SK-N-SH (cell line): ENCODE measurements at regions of chr3 and their contacts with region 1.

Region 1: GRCh38 chr3:126971891-126972351 is 11.0 kb upstream of the PLXNA1 start:
- DNase-seq: peak; percentile 83
- H3K4me3 ChIP-seq: no peak overlapping the region
- H3K27ac ChIP-seq: peak overlapping the region in 1 of 2 experiments; percentile 60; a peak in 1 of 4 replicates
- H3K4me1 ChIP-seq: peaks cover 0 to 18% of the 10 kb centered on the region in 2 experiments; a peak in 1 of 4 replicates
- H3K27me3 ChIP-seq: no peaks in the 10 kb centered on the region
- CTCF ChIP-seq: no peak
- EP300 ChIP-seq: no peak
- RAD21 ChIP-seq: no peak

Region 2: DNA sequence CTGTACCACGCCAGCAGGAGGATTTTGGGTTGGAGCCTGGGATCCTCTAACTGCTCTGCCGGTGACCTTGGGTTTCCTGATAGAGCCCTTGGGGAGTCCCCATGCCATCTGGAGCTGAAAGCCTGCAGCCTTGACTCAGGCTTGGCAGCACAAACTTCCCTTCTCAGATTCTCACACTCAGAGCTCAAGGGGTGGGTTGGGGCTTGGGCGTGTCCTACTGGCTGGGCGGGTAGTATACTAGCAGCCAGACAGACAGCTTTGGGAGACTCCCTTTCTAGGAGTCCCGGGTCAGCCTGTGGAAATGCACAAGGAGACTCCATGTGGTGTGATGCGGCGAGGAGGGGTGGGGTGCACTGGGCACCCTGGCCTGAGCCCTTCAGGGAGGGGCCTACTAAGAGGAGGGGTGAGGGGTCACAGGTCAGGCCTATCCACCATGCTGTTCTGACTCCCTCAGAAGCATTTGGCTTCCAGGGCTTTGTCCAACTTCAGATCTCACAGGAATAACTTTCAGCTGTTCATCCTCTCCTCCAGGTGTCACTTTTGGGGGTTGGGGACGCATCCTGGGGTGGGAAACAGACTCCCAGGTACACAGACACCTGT is 10.6 kb before region 1 on chr3:
- CTCF ChIA-PET with region 1: interaction called, 12 read pairs
- POLR2A ChIA-PET with region 1: interaction called, 5 read pairs
- DNase-seq: no peak
- H3K4me3 ChIP-seq: no peak overlapping the region
- H3K27ac ChIP-seq: peak overlapping the region in 1 of 2 experiments; percentile 71; a peak in 2 of 4 replicates
- H3K4me1 ChIP-seq: peaks cover 0 to 47% of the 10 kb centered on the region in 2 experiments; a peak in 1 of 4 replicates
- H3K27me3 ChIP-seq: no peaks in the 10 kb centered on the region
- CTCF ChIP-seq: no peak
- EP300 ChIP-seq: no peak
- RAD21 ChIP-seq: no peak

Region 3: GRCh38 chr3:127374086-127375010 is 402.4 kb after region 1 on chr3:
- CTCF ChIA-PET with region 1: no interaction called
- POLR2A ChIA-PET with region 1: no interaction called
- DNase-seq: no peak
- H3K4me3 ChIP-seq: no peak overlapping the region
- H3K27ac ChIP-seq: no peak overlapping the region
- H3K4me1 ChIP-seq: peaks cover 0 to 15% of the 10 kb centered on the region in 2 experiments; a peak in 1 of 4 replicates
- H3K27me3 ChIP-seq: 0 out of 2 replicates have a peak, but pooled peaks cover 6% of the 10 kb centered on the region
- CTCF ChIP-seq: peak; percentile 47; the same call in 1 of the 2 replicates
- EP300 ChIP-seq: no peak
- RAD21 ChIP-seq: 0 out of 2 replicates have a peak, but pooled peaks have one; percentile 17